GM10248 (cell line): ENCODE measurements at regions of chr7 and their contacts with region 1.

Region 1: DNA sequence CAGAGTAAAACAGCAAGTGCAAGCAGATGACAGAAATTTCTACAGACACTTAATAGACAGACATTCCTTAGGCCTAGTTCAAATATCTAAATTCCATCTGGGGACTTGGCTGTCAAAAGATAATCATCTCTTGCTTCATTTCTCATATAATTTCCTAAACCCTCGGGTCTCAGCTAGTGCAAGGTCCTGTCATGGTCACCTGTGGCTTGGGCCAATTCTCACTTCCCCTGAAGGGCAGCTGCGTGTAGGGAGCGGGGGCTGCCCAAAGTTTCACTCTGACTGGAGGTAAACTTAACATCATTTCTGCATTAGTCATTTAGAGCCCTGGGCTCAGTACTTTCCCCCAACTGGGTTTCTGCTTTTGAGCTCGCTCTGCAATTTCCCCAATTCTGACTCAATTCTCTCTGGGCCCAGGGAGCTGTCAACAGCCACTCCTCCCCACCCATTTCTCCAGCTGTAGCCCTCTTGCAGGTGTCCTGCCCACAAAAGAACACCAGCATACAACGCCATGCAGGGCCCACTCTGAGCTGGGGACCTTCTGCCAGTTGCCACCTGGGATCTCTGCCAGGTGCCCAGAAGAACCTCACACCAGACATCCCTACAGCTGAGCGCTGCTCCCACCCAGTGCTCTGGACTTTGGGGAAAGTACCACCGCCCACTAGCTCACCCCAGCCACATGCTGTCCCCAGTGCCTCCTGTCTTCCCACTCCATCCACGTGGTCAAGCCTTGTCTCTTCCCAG is 38.0 kb downstream of the VOPP1 start:
- DNase-seq: peak; percentile 86
- CTCF ChIP-seq: no peak

Region 2: GRCh38 chr7:55396225-55396785 is 138.0 kb before region 1 on chr7:
- CTCF ChIA-PET with region 1: no interaction called
- POLR2A ChIA-PET with region 1: no interaction called
- DNase-seq: no peak
- CTCF ChIP-seq: no peak

Region 3: GRCh38 chr7:55509322-55509721 is 25.0 kb before region 1 on chr7:
- CTCF ChIA-PET with region 1: interaction called, 150 read pairs
- POLR2A ChIA-PET with region 1: interaction called, 26 read pairs
- DNase-seq: no peak
- CTCF ChIP-seq: no peak

Region 4: DNA sequence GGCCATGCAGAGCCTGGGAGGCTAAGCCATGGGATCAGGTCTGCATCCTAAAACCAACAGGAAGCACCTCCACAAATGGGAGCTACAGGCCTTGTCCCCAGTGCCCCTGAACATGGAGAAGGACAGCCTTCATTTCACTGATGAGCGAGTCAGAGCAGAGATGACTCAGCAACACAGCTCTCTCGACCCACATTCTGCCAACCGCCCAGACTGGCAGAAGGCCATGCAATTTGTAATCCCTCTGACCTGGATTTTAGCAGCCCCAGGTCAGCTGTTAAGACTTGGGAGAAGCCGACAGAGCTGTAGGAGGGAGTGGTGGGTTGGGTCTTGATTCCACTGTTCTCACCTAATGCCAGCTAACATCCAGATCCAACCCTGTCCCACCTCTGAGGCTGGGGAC is 12.5 kb after region 1 on chr7:
- CTCF ChIA-PET with region 1: interaction called, 124 read pairs
- POLR2A ChIA-PET with region 1: interaction called, 27 read pairs
- DNase-seq: no peak
- CTCF ChIP-seq: no peak

Region 5: DNA sequence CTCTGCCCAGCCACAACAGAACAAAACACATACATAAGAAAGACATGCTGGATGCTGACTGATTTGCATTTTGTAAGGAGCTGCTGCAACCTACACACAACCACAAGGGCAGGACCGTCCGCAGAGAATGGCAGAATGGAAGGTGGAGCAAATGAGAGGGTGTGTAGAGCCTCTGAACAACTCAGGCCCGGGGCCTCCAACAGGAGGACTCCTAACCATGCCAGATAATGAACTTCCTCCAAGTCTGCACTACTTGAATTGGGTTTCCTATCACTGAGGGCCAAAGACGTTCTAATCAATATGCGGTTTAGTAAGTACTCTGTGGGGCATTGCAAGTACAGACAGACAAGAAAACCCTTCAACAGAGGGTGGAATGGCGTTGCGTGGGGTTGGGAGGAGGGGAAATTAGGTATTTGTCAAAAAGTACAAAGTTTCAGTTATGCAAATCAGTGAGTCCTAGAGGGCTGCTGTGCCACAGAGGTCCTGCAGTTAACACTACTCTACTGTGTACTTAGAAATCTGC is 23.4 kb after region 1 on chr7:
- CTCF ChIA-PET with region 1: interaction called, 7 read pairs
- POLR2A ChIA-PET with region 1: interaction called, 10 read pairs
- DNase-seq: peak; percentile 76
- CTCF ChIP-seq: no peak

Region 6: GRCh38 chr7:55572378-55573233 is 38.3 kb after region 1 on chr7 and contains the start of gene VOPP1:
- CTCF ChIA-PET with region 1: interaction called, 21 read pairs
- POLR2A ChIA-PET with region 1: interaction called, 11 read pairs
- DNase-seq: peak; percentile 89
- CTCF ChIP-seq: no peak